ENCODE measurements at regions of chr1 and their contacts with region 1.

Region 1: GRCh38 chr1:63329621-63330330 is 7.4 kb downstream of the FOXD3 start:
- DNase-seq: no peak
- H3K4me3 ChIP-seq: no peak overlapping the region
- H3K27ac ChIP-seq: no peak overlapping the region
- H3K4me1 ChIP-seq: no peaks in the 10 kb centered on the region
- H3K27me3 ChIP-seq: peaks cover 0 to 80% of the 10 kb centered on the region in 2 donors
- CTCF ChIP-seq: no peak
- POLR2A ChIP-seq: no peak

Region 2: DNA sequence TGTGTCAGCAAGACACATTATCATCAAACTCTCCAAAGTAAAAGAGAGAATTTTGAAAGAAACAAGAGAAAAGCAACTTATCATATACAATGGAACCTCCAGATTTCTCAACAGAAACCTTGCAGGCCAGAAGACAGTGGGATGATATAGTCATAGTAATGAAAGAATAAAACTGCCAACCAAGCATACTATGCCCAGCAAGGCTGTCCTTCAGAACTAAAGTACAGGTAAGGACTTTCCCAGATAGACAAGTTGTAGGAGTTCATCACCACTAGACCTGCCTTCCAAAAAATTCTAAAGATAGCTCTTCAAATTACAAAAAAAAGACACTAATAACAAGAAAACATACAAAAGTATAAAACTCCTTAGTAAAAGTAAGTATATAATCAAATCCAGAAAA is 40.6 kb before region 1 on chr1:
- intact Hi-C with region 1: loop called (anchors 2 kb)
- DNase-seq: no peak
- H3K4me3 ChIP-seq: no peak overlapping the region
- H3K27ac ChIP-seq: no peak overlapping the region
- H3K4me1 ChIP-seq: no peaks in the 10 kb centered on the region
- H3K27me3 ChIP-seq: no peaks in the 10 kb centered on the region
- CTCF ChIP-seq: no peak
- POLR2A ChIP-seq: no peak

Region 3: DNA sequence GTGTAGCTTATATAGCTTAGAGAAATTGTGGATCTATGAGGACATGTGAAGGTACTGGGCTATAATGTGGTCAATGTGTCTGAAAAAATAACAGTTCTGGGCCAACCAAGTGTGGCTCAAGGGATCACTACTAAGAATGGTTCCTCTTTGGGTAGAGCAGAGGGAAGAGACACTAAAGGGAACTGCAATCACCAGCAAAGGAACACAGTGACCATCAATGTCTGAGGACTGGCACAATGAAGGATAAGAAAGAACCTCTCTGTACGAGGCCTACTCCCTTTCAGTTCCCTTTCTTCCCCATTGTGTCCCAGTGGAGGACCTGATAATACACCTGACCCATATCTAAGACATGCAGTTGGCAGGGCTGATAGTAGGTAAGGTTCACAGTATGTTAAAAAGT is 1726.5 kb after region 1 on chr1:
- intact Hi-C with region 1: no loop called
- DNase-seq: no peak
- H3K4me3 ChIP-seq: no peak overlapping the region
- H3K27ac ChIP-seq: peak overlapping the region in 1 of 2 donors; percentile 40
- H3K4me1 ChIP-seq: peaks cover 0 to 6% of the 10 kb centered on the region in 2 donors
- H3K27me3 ChIP-seq: no peaks in the 10 kb centered on the region
- CTCF ChIP-seq: no peak
- POLR2A ChIP-seq: no peak

Measured in breast epithelium (tissue), 4 donors.